Right ventricle myocardium superior (tissue), 1 donor: ENCODE measurements at regions of chr5 and their contacts with region 1.

Region 1: DNA sequence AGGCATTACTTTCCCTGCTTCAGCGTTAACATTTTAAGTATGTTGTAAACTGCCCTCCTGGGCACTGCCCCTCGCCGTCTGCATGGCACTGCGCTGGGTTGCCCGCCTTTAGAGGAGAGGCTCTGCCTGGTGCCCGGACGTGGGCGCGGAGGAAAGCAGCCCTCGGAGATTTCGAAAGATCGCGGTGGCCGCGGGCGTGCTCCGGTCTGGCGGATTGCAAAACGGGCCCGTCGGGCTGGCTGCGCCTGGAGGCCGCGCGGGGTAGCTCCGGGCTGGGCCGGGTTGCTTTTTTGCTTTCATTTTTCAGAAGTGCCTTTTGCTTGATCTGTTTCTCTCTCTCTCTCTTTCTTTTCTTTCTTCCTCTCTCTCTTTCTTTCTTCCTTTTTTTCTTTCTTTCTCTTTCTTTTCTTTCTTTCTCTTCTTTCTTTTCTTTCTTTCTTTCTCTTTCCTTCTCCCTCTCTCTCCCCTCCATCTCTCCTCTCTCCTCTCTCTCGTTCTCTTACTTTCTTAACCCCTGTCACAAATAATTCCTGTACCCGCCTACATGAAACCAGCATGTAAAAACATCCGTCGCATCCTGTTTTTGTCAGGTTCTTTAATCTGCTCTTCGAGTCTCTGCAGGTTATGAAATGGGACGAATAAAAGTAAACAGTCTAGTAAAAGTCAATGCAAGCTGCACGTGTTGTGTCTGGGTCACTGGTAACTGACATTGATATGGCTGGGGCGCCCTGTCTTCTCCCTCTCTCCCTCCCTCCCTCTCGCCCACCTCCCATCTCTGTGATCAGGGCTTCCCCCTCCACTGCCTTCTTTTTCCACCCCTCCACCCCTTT is 1.7 kb downstream of the FST start:
- DNase-seq: peak; percentile 83
- ATAC-seq: peak; percentile 76

Region 2: DNA sequence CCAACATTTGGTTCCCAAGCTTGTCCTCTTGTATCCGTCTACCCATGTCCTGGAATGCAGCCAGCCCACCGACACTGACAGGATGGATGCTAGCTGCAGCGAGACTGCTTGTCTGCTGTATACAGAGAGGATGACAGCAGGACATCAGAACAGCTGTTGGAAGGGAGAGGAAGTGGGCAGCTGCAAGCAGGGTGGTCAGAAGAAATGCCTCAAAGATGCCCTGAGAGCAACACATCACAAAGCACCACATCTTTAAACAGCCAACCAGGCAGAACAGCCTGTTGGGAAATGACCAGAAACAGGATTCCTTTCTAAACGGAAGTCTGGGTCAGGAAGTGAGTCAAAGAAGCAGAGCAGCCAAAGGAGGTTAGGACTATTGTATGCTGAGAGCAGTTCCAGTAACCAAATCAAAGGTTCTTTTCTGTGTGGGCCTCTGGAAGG is 297.5 kb after region 1 on chr5:
- intact Hi-C with region 1: no loop called
- DNase-seq: no peak
- ATAC-seq: no peak

Region 3: GRCh38 chr5:53874409-53874808 is 392.3 kb after region 1 on chr5:
- intact Hi-C with region 1: loop called (anchors 5 kb)
- DNase-seq: no peak
- ATAC-seq: no peak

Region 4: DNA sequence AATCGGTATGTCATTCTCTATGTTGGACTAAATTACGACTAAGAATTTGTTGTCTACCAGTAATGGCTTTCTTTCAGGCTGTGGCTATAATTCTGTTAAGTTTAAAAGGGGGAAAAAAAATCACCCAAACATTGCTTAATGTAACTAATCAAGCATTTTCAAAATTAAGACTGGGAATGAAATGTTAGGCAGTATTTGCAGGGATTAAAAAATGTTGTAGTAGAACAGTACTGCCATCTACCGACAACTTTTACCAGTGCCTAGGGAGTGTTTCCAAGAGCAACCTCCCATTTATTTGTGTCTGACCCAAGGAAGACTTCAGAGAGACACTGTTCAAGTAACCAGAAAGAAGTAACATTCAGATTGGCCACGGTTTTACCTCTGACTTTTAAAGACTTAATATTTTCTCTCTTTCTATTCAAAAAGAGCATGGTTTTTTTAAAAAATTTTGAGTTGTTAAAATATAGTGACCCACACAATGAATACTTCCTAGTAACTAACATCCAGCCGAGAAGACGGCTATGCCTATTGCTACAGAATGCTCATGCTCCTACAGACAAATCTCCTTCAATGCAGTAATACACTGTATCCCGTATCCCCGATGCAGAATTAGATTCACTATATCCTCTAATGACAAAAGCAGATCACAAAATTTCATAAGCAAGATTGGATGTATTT is 735.9 kb after region 1 on chr5:
- intact Hi-C with region 1: loop called (anchors 5 kb)
- DNase-seq: no peak
- ATAC-seq: peak; percentile 92